GM12878 (cell line): ENCODE measurements at regions of chr9 and their contacts with region 1.

Region 1: DNA sequence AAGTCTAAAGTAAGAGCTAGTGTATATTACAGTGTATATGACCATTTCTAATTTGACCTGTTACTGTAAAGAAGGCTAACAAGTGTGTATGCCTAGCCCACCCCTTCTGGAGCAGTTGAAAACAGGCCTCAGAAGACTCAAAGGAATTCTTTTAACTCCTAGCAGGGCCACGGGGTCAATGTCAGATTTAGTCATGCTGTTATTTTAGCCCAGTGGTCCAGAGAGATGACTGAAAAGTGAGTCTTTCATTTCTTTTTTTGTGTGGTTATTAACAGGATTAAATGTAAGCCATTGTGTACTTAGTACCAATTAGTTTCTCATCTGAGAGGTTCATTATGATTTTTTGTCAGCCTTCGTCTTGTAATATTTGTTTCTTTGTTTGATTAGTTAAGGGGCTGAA is 24.4 kb downstream of the ZCCHC7 start:
- DNase-seq: peak; percentile 82
- ATAC-seq: peak; percentile 75
- H3K4me3 ChIP-seq: peak overlapping the region; percentile 9; the same call in 1 of the 2 replicates
- H3K27ac ChIP-seq: peak overlapping the region; percentile 82
- H3K4me1 ChIP-seq: peaks cover 18% of the 10 kb centered on the region; the same call in 1 of the 2 replicates
- H3K27me3 ChIP-seq: no peaks in the 10 kb centered on the region
- CTCF ChIP-seq: no peak
- EP300 ChIP-seq: peak; percentile 96 to 98
- POLR2A ChIP-seq: no peak
- RAD21 ChIP-seq: 0 out of 2 replicates have a peak, but pooled peaks have one; percentile 25

Region 2: DNA sequence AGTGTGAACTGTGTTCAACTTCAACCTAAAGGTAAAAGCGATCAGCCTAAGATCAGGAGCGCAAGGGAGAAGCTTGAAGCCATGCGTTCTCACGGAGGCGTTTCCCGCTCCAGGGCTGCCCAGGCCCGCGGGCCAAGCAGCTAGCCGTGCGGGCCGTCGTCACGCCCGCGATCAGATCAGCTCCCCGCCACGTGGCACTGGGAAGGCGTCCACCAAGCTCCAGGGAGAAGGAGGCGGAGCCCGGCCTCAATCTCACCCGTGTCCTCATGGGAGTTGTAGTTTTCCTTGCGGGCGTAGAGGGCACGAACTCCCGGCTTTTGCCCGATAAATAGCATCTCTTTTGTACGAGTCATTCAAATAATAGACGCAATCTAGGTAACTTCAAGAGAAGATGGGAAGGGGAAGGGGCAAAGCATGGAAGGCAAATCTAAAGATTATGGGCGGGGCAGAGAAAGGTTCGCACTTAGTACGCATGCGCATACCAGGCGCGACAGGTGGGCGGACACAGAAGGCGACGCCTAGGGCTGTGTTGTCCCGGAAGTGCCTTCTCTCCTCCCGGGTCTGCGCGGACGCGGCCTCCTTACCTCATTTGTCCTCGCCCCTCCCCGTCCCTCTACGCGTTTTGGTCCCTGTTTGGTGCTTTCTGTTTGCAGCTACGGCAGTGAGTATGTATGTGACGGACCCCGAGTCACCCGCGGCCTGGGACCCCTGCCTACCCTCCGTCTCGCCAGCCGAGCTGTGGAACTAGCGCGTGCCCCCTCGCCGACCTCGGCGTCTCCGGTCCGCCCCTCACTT is 65.2 kb before region 1 on chr9:
- CTCF ChIA-PET with region 1: interaction called, 5 read pairs
- POLR2A ChIA-PET with region 1: interaction called, 4 read pairs
- RAD21 ChIA-PET with region 1: interaction called, 3 read pairs
- SMC1A ChIA-PET with region 1: interaction called, 11 read pairs
- in situ Hi-C with region 1: no loop called
- intact Hi-C with region 1: no loop called
- DNase-seq: peak; percentile 93
- ATAC-seq: peak; percentile 93
- H3K4me3 ChIP-seq: peak overlapping the region; percentile 84
- H3K27ac ChIP-seq: peak overlapping the region; percentile 87
- H3K4me1 ChIP-seq: peaks cover 20% of the 10 kb centered on the region
- H3K27me3 ChIP-seq: no peaks in the 10 kb centered on the region
- CTCF ChIP-seq: no peak
- EP300 ChIP-seq: no peak
- POLR2A ChIP-seq: peak; percentile 89
- RAD21 ChIP-seq: no peak

Region 3: DNA sequence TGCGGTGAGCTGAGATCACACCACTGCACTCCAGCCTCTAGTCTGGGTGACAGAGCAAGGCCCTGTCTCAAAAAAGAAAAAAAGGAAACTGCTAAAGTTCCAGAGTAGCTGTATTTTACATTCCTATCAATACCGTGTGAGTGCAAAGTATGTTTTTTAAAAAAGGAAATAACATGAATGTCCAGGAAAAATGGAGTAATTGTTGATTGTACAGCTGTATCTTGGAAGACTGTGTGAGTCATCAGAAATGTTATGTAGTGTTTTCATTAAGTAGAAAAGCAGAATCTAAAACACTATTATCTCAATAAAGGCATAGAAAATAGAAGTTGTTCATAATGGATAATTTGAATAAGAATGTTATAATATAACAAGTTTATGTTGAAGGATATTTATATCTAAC is 29.5 kb after region 1 on chr9:
- CTCF ChIA-PET with region 1: interaction called, 4 read pairs
- POLR2A ChIA-PET with region 1: interaction called, 3 read pairs
- RAD21 ChIA-PET with region 1: interaction called, 10 read pairs
- SMC1A ChIA-PET with region 1: interaction called, 11 read pairs
- in situ Hi-C with region 1: no loop called
- intact Hi-C with region 1: no loop called
- DNase-seq: no peak
- ATAC-seq: no peak
- H3K4me3 ChIP-seq: no peak overlapping the region
- H3K27ac ChIP-seq: no peak overlapping the region
- H3K4me1 ChIP-seq: no peaks in the 10 kb centered on the region; the same call in 1 of the 2 replicates
- H3K27me3 ChIP-seq: no peaks in the 10 kb centered on the region
- CTCF ChIP-seq: no peak
- EP300 ChIP-seq: no peak
- POLR2A ChIP-seq: no peak
- RAD21 ChIP-seq: no peak

Region 4: DNA sequence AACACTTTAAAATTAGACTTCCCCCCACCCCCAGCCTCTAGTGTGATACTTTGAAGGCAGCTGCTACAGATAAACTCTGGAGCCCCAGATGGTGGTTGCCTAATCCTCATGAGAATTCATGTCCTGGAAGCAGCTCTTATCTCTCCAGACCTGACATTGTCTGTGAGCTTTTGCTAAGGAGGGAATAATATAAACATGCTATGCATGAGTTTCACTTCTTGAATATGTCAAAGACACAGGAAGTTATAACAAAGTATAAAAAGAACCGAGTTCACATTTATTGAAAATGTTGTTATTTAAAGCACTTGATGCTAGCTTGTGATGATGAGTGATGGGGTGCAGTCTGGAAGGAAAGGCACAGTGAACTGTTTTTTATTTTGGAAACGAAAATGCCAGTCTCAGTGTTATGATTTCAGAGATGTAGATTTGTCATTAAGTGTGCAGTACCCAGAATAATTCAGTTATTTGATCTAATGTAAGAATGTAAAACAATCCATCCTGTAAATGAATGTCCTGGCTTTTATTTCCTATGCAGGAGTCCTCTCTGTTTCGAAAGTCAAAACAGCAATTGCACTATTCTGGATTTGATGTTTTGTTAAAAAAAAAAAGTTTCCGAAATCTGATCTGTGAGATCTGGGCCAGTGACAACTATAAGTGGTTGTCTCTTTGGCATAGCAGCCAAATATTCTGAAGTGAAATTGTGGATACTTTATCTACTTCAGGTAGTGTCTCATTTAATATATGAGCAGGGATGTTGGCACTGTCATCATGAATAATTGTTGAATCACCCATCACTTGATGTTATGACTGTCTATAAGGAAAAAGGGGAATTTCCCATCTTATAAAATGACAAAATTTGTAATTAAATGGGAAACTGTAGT is 52.6 kb after region 1 on chr9:
- CTCF ChIA-PET with region 1: interaction called, 4 read pairs
- POLR2A ChIA-PET with region 1: interaction called, 7 read pairs
- RAD21 ChIA-PET with region 1: interaction called, 62 read pairs
- SMC1A ChIA-PET with region 1: interaction called, 14 read pairs
- in situ Hi-C with region 1: no loop called
- intact Hi-C with region 1: no loop called
- DNase-seq: peak; percentile 79
- ATAC-seq: peak; percentile 70
- H3K4me3 ChIP-seq: no peak overlapping the region; the same call in 1 of the 2 replicates
- H3K27ac ChIP-seq: peak overlapping the region; percentile 61
- H3K4me1 ChIP-seq: peaks cover 47% of the 10 kb centered on the region
- H3K27me3 ChIP-seq: no peaks in the 10 kb centered on the region
- CTCF ChIP-seq: no peak
- EP300 ChIP-seq: peak; percentile 34 to 55; a peak in 1 of 4 replicates
- POLR2A ChIP-seq: no peak
- RAD21 ChIP-seq: 0 out of 2 replicates have a peak, but pooled peaks have one; percentile 14

Region 5: DNA sequence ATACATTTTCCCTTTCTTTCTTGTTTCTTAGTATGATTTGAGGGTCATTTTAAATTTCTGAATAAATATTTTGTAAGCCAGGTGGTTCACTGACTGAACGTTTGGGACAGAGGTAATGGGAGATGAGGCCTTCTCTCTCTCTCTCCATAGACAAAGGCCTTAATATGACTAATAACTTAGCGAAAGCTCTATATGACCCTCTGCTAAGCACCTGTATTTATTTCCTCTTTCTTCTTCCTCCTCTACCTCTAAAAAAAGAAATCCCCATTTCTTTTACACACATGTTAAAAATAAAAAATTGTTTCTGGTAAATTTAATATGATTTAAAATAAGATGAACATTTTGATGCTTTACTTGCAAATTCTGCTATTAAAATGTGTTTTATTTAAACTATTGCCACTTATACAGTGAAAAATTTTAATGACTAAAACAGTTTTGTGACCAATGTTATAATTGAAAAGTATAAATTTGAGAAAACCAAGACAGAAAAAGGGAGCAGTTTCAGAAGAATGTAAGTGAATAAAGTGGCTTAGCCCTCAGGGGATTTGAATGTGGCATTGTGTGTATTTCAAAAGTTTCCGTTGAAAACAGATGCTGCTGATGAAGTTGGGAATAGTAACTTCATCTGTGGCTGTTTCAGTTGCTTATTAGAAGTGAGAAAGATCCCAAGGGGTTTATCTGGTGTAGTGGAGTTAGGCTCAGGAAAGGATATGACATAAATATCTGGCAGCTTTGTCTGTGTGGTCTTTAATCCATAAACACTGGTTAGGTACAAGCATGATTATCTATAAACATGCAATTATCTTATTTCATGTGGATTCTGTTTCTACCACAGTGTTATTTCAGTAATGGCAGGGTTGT is 149.1 kb after region 1 on chr9:
- CTCF ChIA-PET with region 1: no interaction called
- POLR2A ChIA-PET with region 1: interaction called, 5 read pairs
- RAD21 ChIA-PET with region 1: interaction called, 8 read pairs
- SMC1A ChIA-PET with region 1: interaction called, 4 read pairs
- in situ Hi-C with region 1: no loop called
- intact Hi-C with region 1: loop called (anchors 2 kb)
- DNase-seq: peak; percentile 91
- ATAC-seq: peak; percentile 73
- H3K4me3 ChIP-seq: no peak overlapping the region
- H3K27ac ChIP-seq: peak overlapping the region; percentile 90
- H3K4me1 ChIP-seq: peaks cover 60% of the 10 kb centered on the region
- H3K27me3 ChIP-seq: no peaks in the 10 kb centered on the region
- CTCF ChIP-seq: no peak
- EP300 ChIP-seq: peak; percentile 95 to 96
- POLR2A ChIP-seq: no peak
- RAD21 ChIP-seq: no peak

Region 6: GRCh38 chr9:37408933-37409710 is 264.4 kb after region 1 on chr9:
- CTCF ChIA-PET with region 1: interaction called, 3 read pairs
- POLR2A ChIA-PET with region 1: no interaction called
- RAD21 ChIA-PET with region 1: interaction called, 5 read pairs
- SMC1A ChIA-PET with region 1: interaction called, 6 read pairs
- in situ Hi-C with region 1: no loop called
- intact Hi-C with region 1: loop called (anchors 1 kb)
- DNase-seq: peak; percentile 100
- ATAC-seq: peak; percentile 76
- H3K4me3 ChIP-seq: peak overlapping the region; percentile 57; the same call in 1 of the 2 replicates
- H3K27ac ChIP-seq: peak overlapping the region; percentile 100
- H3K4me1 ChIP-seq: peaks cover 66% of the 10 kb centered on the region
- H3K27me3 ChIP-seq: no peaks in the 10 kb centered on the region
- CTCF ChIP-seq: peak in 2 of 3 experiments; percentile 11 to 16; a peak in 1 of 6 replicates
- EP300 ChIP-seq: peak; percentile 98 to 99
- POLR2A ChIP-seq: peak; percentile 85
- RAD21 ChIP-seq: no peak